Activated T-helper 1 cell treated with anti-CD3 and anti-CD28 coated beads, Interleukin-12 subunit alpha, Interleukin-12 subunit beta, Interleukin-2, Interleukin-4 antibody, amounts not matched to agents 30 ng/mL and 10 ng/mL and 1 ng/mL, durations not matched to agents 14 hours and 24 hours and 36 hours (primary cell): ENCODE measurements at regions of chr22 and their contacts with region 1.

Region 1: DNA sequence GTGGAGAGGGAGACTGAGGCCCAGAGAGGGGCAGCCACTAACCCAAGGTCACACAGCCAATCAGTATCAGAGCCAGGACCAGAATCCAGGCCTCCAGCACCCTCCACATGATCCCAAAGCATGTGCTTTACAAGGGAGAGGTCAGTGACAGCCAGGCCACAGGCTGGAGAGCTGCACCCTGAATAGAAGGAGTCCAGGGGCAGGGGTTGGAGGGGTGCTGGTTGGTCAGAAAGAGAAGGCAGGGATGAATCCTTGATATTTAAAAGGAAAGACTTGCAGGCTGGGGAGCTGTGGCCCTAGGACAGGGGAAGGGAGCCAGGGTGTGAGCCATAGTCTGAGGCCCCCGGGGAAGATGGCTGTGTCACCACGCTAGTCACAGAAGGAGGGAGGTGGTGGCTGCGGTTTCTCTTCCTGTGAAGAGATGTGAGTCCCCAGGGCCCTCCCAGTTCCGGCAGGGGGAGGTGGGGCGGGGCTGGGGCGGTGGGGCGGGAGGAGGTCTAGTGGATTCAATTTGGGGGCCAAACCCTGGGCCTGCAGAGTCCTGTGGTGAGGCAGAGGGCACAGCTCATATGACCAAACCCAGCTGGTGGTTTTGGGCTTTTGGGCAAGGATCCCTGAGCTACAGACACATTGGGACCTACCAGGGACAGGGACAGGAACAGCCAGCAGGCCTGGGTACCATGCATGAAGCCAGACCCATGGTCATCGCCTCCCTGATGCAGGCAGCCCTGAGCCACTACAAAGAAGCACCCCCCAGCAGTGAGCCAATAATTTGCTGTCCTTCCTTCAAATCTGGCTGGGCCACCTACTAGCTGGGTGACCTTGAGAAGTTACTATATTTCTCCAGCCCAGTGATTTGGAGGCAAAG is 14.0 kb downstream of the RAC2 start:
- DNase-seq: peak; percentile 87
- H3K4me3 Mint-ChIP-seq: peak overlapping the region; percentile 80
- H3K27ac Mint-ChIP-seq: peak overlapping the region; percentile 99
- H3K4me1 Mint-ChIP-seq: peaks cover 88% of the 10 kb centered on the region
- H3K27me3 Mint-ChIP-seq: no peaks in the 10 kb centered on the region

Region 2: GRCh38 chr22:37095113-37095512 is 134.9 kb before region 1 on chr22:
- intact Hi-C with region 1: loop called (anchors 1 kb)
- DNase-seq: no peak
- H3K4me3 Mint-ChIP-seq: no peak overlapping the region
- H3K27ac Mint-ChIP-seq: peak overlapping the region; percentile 80
- H3K4me1 Mint-ChIP-seq: peaks cover 38% of the 10 kb centered on the region
- H3K27me3 Mint-ChIP-seq: peaks cover 3% of the 10 kb centered on the region

Region 3: DNA sequence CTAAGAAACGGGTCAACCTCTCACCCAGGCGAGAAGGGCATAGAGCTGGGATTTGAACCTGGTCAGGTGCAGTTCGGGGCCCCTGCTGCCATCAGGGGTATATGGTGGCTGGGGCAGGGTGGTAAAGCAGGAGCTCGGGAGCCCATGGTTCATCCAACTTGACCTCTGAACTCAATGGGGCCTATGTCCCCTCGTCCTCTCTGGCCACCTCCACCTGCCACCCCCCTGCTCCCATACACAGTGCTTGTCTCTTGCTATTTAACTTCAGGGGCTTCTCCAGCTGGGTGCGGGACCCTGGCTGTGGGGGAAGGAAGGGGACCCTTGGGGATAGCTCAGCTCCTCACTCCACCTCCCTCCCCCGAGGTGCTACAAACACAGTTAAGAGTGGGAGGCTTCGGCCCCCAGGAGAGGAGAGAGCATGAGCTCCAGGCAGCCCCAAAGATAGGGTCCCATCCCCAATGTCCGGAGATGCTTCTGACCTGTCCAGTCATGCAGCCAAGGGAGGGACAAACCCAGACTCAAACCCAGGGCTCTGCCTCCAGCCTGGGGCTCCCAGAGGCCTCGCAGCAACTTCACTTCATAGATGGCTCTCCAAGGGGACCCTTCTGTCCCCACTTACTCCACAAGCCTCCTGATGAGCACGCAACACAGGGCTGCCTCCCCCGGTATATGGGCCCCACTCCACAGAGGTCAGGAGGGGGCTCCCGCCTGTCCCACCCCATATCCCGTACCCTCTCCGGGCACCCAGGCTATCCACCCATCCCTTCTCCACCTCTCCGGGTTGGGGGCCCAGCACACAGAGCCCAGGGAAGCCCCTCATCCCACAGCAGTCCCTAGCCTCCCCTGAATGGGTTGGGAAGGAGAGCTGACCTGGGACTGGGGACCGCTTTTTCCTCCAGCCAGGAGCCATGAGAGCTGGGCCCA is 81.0 kb before region 1 on chr22:
- intact Hi-C with region 1: loop called (anchors 1 kb)
- DNase-seq: no peak
- H3K4me3 Mint-ChIP-seq: peak overlapping the region; percentile 92
- H3K27ac Mint-ChIP-seq: peak overlapping the region; percentile 93
- H3K4me1 Mint-ChIP-seq: peaks cover 72% of the 10 kb centered on the region
- H3K27me3 Mint-ChIP-seq: no peaks in the 10 kb centered on the region

Region 4: DNA sequence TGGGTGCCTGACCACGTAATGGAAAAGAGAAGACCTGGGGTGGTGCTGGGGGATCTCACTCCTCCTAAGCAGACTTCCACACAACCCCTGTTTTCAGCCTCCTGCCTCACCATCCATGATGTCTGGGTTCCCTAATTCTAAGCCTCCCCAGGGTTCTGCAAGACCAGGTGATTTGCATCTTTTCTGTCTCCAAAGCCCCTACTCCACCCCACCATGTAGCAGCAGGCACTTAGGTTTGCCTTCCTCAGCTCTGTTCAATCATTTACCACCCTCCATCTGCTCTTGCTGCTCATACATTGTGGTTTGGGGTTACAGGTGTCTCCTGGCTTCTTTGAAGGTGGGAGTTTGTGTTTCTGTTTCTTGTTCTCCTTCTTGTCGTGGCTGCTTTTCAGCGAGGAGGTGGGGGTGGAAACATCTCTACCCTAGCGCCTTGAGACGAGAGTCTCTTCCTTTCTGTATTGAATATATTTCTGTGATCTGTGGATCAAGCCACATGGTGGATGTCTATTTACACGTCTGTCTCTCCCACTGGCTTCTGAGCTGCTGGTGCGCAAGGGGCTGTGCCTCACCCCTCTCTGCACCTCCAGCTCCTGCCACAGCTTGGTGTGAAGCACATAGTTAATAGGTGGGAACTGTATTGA is 11.1 kb before region 1 on chr22:
- intact Hi-C with region 1: loop called (anchors 1 kb)
- DNase-seq: peak; percentile 72
- H3K4me3 Mint-ChIP-seq: peak overlapping the region; percentile 79
- H3K27ac Mint-ChIP-seq: peak overlapping the region; percentile 96
- H3K4me1 Mint-ChIP-seq: peaks cover 68% of the 10 kb centered on the region
- H3K27me3 Mint-ChIP-seq: no peaks in the 10 kb centered on the region